HEK293T (cell line): ENCODE measurements at regions of chr12 and their contacts with region 1.

Region 1: DNA sequence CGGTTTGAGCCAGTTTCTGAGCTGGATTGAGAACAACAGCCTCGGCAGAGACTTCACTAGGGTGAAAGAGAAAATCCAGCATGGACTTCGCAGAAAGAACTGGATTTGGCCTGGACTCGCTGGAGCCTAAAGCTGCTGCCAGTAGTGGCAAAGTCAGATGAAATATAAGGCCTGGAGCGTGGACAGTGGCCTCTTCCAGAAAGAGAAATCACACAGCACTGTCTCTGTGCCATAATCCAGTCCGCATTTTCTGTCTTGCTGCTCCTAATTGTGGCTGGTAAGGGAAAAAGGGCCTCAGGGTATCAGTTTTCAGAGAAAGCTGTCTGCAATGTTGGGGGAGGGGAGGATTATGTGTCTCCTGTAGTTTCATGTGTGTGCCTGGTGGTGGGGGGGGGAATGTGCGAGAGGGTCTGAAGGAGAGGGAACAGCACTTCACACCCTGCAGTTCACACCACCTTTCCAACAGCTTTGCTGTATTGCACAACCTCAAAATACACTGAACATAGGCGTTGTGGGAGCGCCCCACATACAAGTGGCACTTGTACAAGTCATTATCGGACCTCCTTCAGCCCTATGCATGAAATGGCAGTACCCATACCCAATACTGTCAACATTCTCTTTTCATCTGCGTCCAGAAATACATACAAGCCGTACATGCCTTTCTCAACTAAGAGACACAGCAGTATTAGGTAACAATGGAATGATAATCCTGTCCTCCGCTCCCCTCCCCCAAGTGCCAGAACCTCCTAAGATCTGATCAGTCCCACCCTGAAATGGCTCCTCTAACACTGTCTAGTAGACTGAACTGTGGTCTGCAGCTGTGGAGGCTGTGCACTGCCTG is 107.5 kb upstream of the ATF7IP start:
- DNase-seq: peak; percentile 82

Region 2: DNA sequence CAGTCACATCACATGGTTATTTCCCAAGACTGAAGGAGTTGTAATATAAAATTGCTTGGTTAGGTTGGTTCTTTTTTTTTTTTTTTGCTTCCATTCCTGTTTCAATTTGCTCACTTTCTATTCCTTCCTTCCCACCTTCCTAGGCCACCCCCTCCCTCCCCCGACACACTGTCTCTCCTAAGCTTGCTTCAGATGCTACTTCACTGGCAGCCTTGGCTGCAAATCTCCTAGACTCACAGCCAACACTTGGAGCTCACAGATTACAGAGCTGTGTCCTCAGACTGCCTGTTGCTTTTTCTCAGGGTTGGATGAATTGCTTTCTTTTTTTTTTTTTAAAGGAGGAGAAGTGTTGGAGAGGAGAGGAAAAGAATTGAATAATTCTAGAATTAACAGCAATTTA is 199.2 kb before region 1 on chr12:
- CTCF ChIA-PET with region 1: no interaction called
- POLR2A ChIA-PET with region 1: no interaction called
- DNase-seq: no peak

Region 3: DNA sequence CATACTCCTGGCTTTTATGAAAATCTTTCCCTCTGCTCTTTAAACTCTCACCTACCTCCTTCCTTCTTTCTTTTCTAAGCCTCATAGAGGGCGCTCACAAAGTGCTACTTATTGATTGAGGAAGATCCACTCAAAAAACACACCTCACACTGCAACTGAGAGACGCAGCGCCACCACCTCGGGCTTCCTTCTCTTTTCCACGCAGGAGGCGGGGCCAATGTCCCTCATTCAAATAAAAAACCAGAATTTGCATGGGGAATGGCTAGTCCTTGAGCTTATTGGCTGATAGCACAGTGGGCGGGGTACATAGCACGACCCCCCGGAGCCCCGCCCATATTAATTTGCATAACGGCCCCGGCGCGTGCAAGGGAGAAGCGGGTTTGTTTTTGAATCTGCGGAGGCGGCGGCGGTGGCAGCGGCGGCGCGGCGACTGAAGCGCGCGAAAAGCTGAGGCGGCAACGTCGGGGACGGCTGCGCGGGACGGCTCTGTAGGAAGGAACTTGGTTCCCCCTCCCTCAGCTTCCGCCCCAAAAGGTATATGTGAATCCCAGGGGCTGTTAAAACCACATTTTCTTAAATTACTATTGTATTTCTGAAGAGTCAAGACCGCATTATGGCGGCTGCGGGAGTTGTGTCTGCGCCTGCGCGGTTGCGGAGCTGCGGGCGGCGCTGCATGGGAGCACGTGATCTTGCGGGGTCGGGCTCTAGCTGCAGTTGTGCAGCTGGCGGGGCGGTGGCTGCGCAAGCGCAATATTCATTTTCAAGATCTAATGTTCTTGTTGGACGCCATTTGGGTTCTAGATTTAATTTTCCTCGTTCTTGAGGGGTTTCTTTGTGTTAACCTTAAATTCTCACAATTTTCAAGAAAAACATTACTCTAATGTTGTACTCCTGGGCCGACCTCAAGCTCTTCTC is 107.6 kb after region 1 on chr12 and contains the start of gene ATF7IP:
- CTCF ChIA-PET with region 1: interaction called, 4 read pairs
- POLR2A ChIA-PET with region 1: interaction called, 21 read pairs
- DNase-seq: peak; percentile 92

Region 4: DNA sequence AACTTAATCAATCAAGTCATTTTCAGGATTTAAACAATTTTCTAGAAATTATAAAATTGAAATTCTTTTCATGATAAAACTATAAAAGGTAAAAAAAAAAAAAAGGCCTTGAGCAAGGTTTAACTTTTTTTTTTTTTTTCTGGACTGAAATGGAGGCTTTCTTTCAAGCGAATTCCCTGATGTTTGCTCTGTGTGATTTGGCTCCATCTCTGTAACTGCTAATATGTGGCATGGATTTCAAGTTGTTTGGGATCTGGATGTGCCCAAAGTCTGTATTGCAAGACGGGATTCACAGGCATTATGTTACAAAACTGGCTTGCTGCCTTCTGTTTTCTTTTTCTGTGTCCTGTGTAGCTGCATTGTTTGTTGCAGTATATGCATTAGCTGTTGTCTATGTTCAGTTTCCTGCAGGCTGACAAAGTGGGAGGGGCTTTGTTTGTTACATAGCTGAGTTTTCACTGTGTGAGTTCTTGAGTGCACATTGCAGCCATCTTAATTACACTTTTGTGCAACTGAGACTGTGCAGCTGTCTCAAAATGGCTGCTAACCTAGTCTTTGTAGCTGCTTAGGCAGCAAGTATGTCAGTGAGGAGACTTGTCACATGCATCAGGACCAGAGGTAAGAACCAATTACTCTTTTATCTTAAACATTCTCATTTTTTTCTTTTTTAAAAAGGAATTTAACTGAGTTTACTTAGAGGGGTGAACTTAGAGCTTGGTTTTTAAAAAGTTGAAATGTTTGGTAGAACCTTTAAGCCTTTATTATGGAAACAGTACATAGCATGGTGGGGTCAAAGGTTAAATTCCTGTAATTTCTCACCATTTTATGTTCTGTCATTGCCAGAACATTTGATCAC is 127.1 kb after region 1 on chr12:
- CTCF ChIA-PET with region 1: no interaction called
- POLR2A ChIA-PET with region 1: interaction called, 13 read pairs
- DNase-seq: peak; percentile 52

Region 5: GRCh38 chr12:14394317-14395073 is 136.5 kb after region 1 on chr12:
- CTCF ChIA-PET with region 1: no interaction called
- POLR2A ChIA-PET with region 1: interaction called, 11 read pairs
- DNase-seq: peak; percentile 45